ENCODE measurements at regions of chr10 and their contacts with region 1.

Region 1: DNA sequence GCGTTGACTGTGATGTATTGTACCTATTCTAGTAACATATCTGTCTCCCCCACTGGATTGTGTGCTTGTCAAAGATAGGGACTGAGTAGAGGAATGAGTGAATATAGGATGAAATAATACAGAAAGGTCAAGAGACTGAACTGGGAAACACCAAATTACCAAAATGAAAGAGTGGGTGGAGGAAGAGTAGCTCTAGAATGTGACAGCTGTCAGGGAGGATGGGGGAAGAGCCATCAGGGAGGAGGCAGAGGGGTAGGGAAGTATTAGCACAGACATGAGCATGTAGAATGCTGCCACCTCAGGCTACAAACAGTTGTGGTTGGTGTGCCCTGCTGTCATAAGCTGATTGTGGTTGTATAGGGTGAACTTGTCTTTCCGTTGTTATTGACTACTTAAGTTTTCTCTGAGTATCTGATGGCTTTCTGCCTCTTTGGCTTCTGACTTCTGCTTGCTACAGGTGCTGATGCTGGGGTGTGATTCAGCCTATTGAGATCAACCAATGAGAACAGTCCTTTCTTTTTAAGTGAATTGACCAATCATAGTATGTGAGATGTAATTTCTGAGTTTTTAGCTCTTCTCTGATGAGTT is 5.6 kb downstream of the CCSER2 start:
- DNase-seq: no peak
- H3K4me3 ChIP-seq: no peak overlapping the region
- H3K27ac ChIP-seq: no peak overlapping the region
- H3K4me1 ChIP-seq: peaks cover 29% of the 10 kb centered on the region in 2 experiments
- H3K27me3 ChIP-seq: no peaks in the 10 kb centered on the region
- CTCF ChIP-seq: no peak
- EP300 ChIP-seq: no peak
- RAD21 ChIP-seq: no peak

Region 2: DNA sequence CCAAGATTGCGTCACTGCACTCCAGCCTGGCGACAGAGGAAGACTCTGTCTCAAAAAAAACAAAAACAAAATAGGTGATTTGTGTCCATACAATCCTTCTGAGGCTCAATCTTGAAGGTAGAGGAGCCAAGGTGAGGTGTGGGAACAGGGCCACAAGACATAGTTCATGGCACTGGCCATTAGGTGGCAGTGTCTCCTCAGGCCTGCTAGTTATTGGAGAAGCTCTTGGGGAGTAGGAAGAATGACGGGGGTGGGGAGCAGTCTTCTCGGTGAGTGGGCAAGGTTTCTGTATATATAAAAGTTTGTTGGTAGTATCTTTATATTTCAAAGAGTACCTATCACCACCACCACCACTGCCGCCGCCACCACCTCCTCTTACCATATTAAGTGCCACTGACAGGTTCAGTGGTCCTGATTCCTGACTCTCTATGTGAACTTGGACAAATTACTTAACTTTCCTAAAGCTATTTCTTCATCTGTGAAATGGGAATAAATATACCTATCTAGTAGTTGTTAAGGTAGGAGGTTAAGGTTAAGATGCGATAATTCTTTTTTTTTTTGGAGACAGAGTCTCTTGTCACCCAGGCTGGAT is 18.4 kb after region 1 on chr10:
- CTCF ChIA-PET with region 1: interaction called, 34 read pairs
- POLR2A ChIA-PET with region 1: no interaction called
- DNase-seq: peak; percentile 65
- H3K4me3 ChIP-seq: no peak overlapping the region
- H3K27ac ChIP-seq: no peak overlapping the region
- H3K4me1 ChIP-seq: peaks cover 0 to 9% of the 10 kb centered on the region in 2 experiments; a peak in 1 of 4 replicates
- H3K27me3 ChIP-seq: no peaks in the 10 kb centered on the region
- CTCF ChIP-seq: peak; percentile 80
- EP300 ChIP-seq: no peak
- RAD21 ChIP-seq: peak; percentile 68

Measured in SK-N-SH (cell line).